ENCODE measurements at regions of chr14 and their contacts with region 1.

Region 1: DNA sequence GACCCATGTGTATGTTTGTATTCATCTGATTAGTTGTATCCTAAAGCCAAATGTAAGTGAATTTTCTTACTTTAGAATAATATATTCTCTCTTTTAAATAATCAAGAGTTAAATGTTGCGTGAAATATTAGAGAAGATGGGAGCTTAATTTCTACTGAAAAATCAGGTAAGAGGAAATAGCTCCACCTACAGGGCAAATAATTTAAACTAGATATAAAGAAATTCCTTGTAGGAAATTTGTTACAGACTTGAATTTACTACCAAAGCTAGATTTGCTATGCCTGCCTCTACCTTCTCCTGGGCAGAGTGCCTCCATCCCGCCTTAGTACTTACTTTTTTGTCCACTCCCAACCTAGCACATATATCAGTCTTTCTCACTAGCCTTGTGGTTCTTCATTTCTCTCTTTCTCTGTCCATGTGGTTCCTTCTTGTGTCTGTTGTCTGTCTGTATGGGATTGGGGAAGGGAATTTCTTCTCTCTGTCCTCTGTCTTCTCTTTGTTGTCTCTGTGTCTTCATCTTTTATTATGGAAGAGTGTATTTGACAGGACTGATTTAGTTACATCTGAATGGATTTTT is 44.7 kb downstream of the PALS1 start:
- DNase-seq: no peak
- ATAC-seq: no peak
- H3K4me3 ChIP-seq: no peak overlapping the region
- H3K27ac ChIP-seq: no peak overlapping the region
- H3K4me1 ChIP-seq: no peaks in the 10 kb centered on the region
- H3K27me3 ChIP-seq: no peaks in the 10 kb centered on the region
- CTCF ChIP-seq: peak in 2 of 3 experiments; percentile 38 to 46; a peak in 2 of 6 replicates
- EP300 ChIP-seq: no peak
- POLR2A ChIP-seq: no peak
- RAD21 ChIP-seq: peak; percentile 60

Region 2: DNA sequence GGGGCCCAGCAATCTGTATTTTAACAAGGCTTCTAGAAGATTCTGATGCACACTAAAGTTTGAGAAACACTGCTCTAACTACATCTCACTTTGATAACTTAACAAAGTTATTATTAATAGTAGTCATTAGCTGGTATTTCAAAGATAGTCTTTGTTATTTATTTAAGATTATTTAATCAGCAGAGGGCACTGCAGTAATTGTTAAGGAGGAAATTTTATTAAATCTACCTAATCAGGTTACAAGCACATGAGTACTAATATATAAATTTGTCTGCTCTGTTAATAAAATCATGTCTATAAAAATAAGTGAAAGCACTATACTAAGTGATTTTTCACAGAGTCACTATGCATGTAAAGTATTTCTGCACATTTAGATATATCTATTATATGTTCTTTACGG is 418.0 kb before region 1 on chr14:
- CTCF ChIA-PET with region 1: no interaction called
- POLR2A ChIA-PET with region 1: no interaction called
- RAD21 ChIA-PET with region 1: no interaction called
- SMC1A ChIA-PET with region 1: no interaction called
- in situ Hi-C with region 1: no loop called
- intact Hi-C with region 1: no loop called
- DNase-seq: no peak
- ATAC-seq: no peak
- H3K4me3 ChIP-seq: no peak overlapping the region
- H3K27ac ChIP-seq: no peak overlapping the region
- H3K4me1 ChIP-seq: no peaks in the 10 kb centered on the region
- H3K27me3 ChIP-seq: no peaks in the 10 kb centered on the region
- CTCF ChIP-seq: no peak
- EP300 ChIP-seq: no peak
- POLR2A ChIP-seq: no peak
- RAD21 ChIP-seq: no peak

Region 3: DNA sequence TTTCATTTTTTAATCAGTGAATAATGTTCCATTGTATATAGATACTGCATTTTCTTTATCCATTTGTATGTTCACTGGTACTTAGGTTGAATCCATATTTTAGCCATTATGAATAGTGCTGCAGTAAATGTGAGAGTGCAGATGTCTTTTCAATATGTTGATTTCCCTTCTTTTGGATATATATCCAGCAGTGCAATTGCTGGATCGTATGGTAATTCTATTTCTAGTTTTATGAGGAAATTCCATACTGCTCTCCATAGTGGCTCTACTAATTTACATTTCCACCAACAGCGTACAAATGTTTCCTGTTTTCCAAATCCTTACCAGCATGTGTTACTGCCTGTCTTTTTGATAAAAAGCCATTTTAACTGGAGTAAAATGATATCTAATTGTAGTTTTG is 385.2 kb before region 1 on chr14:
- CTCF ChIA-PET with region 1: no interaction called
- POLR2A ChIA-PET with region 1: no interaction called
- RAD21 ChIA-PET with region 1: no interaction called
- SMC1A ChIA-PET with region 1: no interaction called
- in situ Hi-C with region 1: no loop called
- intact Hi-C with region 1: no loop called
- DNase-seq: no peak
- ATAC-seq: no peak
- H3K4me3 ChIP-seq: no peak overlapping the region
- H3K27ac ChIP-seq: no peak overlapping the region
- H3K4me1 ChIP-seq: no peaks in the 10 kb centered on the region
- H3K27me3 ChIP-seq: no peaks in the 10 kb centered on the region
- CTCF ChIP-seq: no peak
- EP300 ChIP-seq: no peak
- POLR2A ChIP-seq: no peak
- RAD21 ChIP-seq: no peak

Region 4: GRCh38 chr14:67166450-67166853 is 119.5 kb before region 1 on chr14:
- CTCF ChIA-PET with region 1: interaction called, 95 read pairs
- POLR2A ChIA-PET with region 1: interaction called, 7 read pairs
- RAD21 ChIA-PET with region 1: interaction called, 24 read pairs
- SMC1A ChIA-PET with region 1: interaction called, 24 read pairs
- in situ Hi-C with region 1: loop called (anchors 5 kb)
- intact Hi-C with region 1: loop called (anchors 1 kb)
- DNase-seq: no peak
- ATAC-seq: peak; percentile 53; the same call in 2 of the 3 replicates
- H3K4me3 ChIP-seq: no peak overlapping the region
- H3K27ac ChIP-seq: no peak overlapping the region
- H3K4me1 ChIP-seq: no peaks in the 10 kb centered on the region
- H3K27me3 ChIP-seq: no peaks in the 10 kb centered on the region
- CTCF ChIP-seq: peak; percentile 63 to 72 (median 64)
- EP300 ChIP-seq: no peak
- POLR2A ChIP-seq: no peak
- RAD21 ChIP-seq: peak; percentile 90

Region 5: DNA sequence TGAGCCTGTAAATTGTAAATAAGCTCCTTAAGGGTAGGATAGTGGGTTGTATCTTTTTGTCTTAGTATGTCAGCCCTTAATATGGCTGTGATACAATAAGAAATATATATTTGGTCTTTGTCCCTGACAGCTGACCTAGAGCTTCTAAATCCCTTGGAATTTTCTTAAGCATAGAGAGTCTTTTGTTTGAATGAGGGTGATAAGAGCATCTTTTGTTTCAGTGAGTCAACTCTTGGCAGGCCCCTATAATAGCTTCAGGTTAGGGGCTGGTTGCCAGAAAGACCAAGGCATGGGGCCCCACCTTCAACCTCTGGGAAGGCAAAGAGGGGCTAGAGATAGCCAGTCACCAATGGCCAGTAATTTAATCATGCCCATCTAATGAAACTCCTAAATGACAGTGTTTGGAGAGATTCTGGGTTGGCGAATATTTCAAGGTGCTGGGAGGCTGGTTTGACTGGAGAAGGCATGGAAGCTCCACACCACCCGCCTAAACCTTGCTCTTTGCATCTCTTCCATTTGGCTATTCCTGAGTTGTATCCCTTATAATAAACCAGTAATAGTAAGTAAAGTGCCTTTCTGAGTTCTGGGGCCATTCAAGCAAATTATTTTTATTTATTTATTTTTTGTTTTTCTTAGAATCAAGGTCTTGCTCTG is 34.3 kb before region 1 on chr14:
- CTCF ChIA-PET with region 1: interaction called, 12 read pairs
- POLR2A ChIA-PET with region 1: no interaction called
- RAD21 ChIA-PET with region 1: no interaction called
- SMC1A ChIA-PET with region 1: interaction called, 7 read pairs
- in situ Hi-C with region 1: no loop called
- intact Hi-C with region 1: no loop called
- DNase-seq: no peak
- ATAC-seq: no peak
- H3K4me3 ChIP-seq: no peak overlapping the region
- H3K27ac ChIP-seq: no peak overlapping the region
- H3K4me1 ChIP-seq: peaks cover 4% of the 10 kb centered on the region; the same call in 1 of the 2 replicates
- H3K27me3 ChIP-seq: no peaks in the 10 kb centered on the region
- CTCF ChIP-seq: no peak
- EP300 ChIP-seq: no peak
- POLR2A ChIP-seq: no peak
- RAD21 ChIP-seq: no peak

Region 6: GRCh38 chr14:67269298-67270061 is 16.5 kb before region 1 on chr14:
- CTCF ChIA-PET with region 1: interaction called, 33 read pairs
- POLR2A ChIA-PET with region 1: no interaction called
- RAD21 ChIA-PET with region 1: interaction called, 3 read pairs
- SMC1A ChIA-PET with region 1: interaction called, 4 read pairs
- in situ Hi-C with region 1: no loop called
- intact Hi-C with region 1: no loop called
- DNase-seq: no peak
- ATAC-seq: no peak
- H3K4me3 ChIP-seq: no peak overlapping the region
- H3K27ac ChIP-seq: no peak overlapping the region
- H3K4me1 ChIP-seq: no peaks in the 10 kb centered on the region
- H3K27me3 ChIP-seq: no peaks in the 10 kb centered on the region
- CTCF ChIP-seq: no peak
- EP300 ChIP-seq: no peak
- POLR2A ChIP-seq: no peak
- RAD21 ChIP-seq: no peak

Region 7: GRCh38 chr14:67420102-67420830 is 134.3 kb after region 1 on chr14:
- CTCF ChIA-PET with region 1: no interaction called
- POLR2A ChIA-PET with region 1: no interaction called
- RAD21 ChIA-PET with region 1: no interaction called
- SMC1A ChIA-PET with region 1: no interaction called
- in situ Hi-C with region 1: no loop called
- intact Hi-C with region 1: no loop called
- DNase-seq: no peak
- ATAC-seq: peak; percentile 91
- H3K4me3 ChIP-seq: no peak overlapping the region
- H3K27ac ChIP-seq: no peak overlapping the region
- H3K4me1 ChIP-seq: no peaks in the 10 kb centered on the region
- H3K27me3 ChIP-seq: peaks cover 0 to 4% of the 10 kb centered on the region in 2 experiments; a peak in 2 of 4 replicates
- CTCF ChIP-seq: peak; percentile 63 to 80 (median 69)
- EP300 ChIP-seq: no peak
- POLR2A ChIP-seq: no peak
- RAD21 ChIP-seq: peak; percentile 46

Region 8: GRCh38 chr14:68076451-68076850 is 790.5 kb after region 1 on chr14:
- CTCF ChIA-PET with region 1: no interaction called
- POLR2A ChIA-PET with region 1: no interaction called
- RAD21 ChIA-PET with region 1: no interaction called
- SMC1A ChIA-PET with region 1: no interaction called
- in situ Hi-C with region 1: no loop called
- intact Hi-C with region 1: no loop called
- DNase-seq: no peak
- ATAC-seq: no peak
- H3K4me3 ChIP-seq: no peak overlapping the region
- H3K27ac ChIP-seq: no peak overlapping the region
- H3K4me1 ChIP-seq: no peaks in the 10 kb centered on the region
- H3K27me3 ChIP-seq: no peaks in the 10 kb centered on the region
- CTCF ChIP-seq: no peak
- EP300 ChIP-seq: no peak
- POLR2A ChIP-seq: no peak
- RAD21 ChIP-seq: no peak